Aorta (tissue), 5 donors: ENCODE measurements at regions of chr18 and their contacts with region 1.

Region 1: DNA sequence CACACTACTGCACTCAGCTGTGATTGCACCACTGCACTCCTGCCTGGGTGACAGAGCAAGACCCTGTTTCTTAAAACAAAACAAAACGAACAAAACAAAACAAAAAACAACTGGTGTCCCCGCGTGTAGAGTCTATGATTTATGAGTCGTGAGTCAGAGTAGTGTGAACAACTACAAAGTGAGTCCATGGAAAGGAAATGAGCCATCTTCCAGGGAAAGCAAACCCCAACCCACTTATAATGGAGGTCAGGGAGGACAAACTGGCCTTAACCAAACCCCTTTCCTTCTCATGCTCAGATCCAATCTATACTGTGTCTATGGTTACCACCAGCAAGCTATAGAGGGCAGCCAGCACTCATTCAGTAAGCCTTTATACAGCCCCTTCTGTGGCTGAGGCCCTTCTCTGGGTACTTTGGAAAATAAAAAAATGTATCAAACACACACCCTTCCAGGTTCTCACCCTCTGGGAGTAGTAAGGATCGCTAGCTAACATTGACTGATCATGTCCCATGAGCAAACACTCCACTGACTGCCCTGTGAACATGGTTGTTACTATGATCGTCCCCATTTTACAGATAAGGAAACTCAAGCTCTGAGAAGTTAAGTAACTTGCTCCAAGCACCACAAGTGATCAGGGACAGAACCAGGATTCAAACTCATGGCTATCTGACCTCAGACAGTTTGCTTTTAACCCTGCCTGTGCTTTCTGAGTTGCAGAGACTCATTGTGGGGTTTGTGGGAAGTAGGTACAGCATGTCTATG is 24.7 kb upstream of the COLEC12 start:
- DNase-seq: no peak
- ATAC-seq: no peak
- H3K4me3 ChIP-seq: no peak overlapping the region
- H3K27ac ChIP-seq: no peak overlapping the region
- H3K4me1 ChIP-seq: peaks cover 3 to 6% of the 10 kb centered on the region in 2 donors
- H3K27me3 ChIP-seq: no peaks in the 10 kb centered on the region

Region 2: DNA sequence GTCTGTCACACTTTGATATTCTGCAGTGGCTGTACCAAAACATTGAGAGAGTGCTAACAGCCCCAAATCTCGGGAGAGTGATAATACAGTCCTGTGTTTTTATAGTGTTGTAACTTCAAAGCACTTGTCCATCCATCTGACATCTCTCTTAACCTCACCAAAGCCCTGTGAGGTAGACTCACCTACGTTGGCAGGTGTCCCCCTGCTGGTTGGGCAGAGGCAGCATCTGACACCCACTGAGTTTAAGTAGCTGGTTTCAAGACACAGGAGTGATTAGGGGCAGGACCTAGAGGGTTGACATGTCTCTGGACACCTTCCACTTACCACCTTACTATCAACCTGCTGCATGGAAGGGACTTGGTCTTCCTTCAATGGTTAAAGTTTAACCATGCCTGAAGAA is 47.7 kb before region 1 on chr18:
- intact Hi-C with region 1: loop called in 1 of 2 experiments (anchors 10 kb)
- DNase-seq: no peak
- ATAC-seq: no peak
- H3K4me3 ChIP-seq: no peak overlapping the region
- H3K27ac ChIP-seq: no peak overlapping the region
- H3K4me1 ChIP-seq: peaks cover 0 to 4% of the 10 kb centered on the region in 2 donors
- H3K27me3 ChIP-seq: no peaks in the 10 kb centered on the region